ENCODE measurements at regions of chr3 and their contacts with region 1.

Region 1: GRCh38 chr3:131033480-131034080 is 6.9 kb downstream of the NEK11 start:
- DNase-seq: peak; percentile 17 to 50 (median 23)
- H3K4me3 ChIP-seq: no peak overlapping the region
- H3K4me3 Mint-ChIP-seq: no peak overlapping the region
- H3K27ac ChIP-seq: no peak overlapping the region
- H3K27ac Mint-ChIP-seq: no peak overlapping the region
- H3K4me1 ChIP-seq: no peaks in the 10 kb centered on the region
- H3K4me1 Mint-ChIP-seq: no peaks in the 10 kb centered on the region
- H3K27me3 ChIP-seq: no peaks in the 10 kb centered on the region
- H3K27me3 Mint-ChIP-seq: peaks cover 0 to 3% (median 0%) of the 10 kb centered on the region in 3 donors
- CTCF ChIP-seq: peak; percentile 88

Region 2: DNA sequence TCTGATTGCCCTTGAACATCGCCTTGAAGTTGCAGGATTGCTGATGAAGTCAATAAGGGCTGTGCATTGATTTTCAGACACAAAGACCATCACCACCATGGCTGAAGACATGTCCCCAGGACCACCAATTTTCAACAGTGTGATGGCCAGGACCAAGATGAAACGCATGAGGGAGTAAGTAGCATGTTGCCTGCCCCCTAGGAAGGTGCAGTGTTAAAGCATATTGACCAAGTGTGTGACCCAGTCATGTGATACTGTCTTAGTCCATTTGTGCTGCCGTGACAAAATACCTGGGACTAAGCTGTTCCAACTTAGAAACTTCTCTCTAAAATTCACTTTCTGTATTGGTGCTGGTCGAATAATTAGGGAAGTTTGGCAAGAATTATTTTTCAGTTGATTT is 239.8 kb after region 1 on chr3:
- intact Hi-C with region 1: no loop called
- DNase-seq: no peak
- H3K4me3 ChIP-seq: no peak overlapping the region
- H3K4me3 Mint-ChIP-seq: no peak overlapping the region
- H3K27ac ChIP-seq: no peak overlapping the region
- H3K27ac Mint-ChIP-seq: no peak overlapping the region
- H3K4me1 ChIP-seq: no peaks in the 10 kb centered on the region
- H3K4me1 Mint-ChIP-seq: peaks cover 5% of the 10 kb centered on the region
- H3K27me3 ChIP-seq: no peaks in the 10 kb centered on the region
- H3K27me3 Mint-ChIP-seq: peaks cover 0 to 3% (median 2%) of the 10 kb centered on the region in 3 donors
- CTCF ChIP-seq: no peak

Region 3: GRCh38 chr3:132034486-132035464 is 1001.2 kb after region 1 on chr3 and contains the start of gene CPNE4:
- intact Hi-C with region 1: loop called in 1 of 2 experiments (anchors 10 kb)
- DNase-seq: peak; percentile 24 to 39 (median 33)
- H3K4me3 ChIP-seq: peak within 1 kb of the TSS in 1 of 3 experiments; percentile 31
- H3K4me3 Mint-ChIP-seq: peak within 1 kb of the TSS; percentile 6 to 89
- H3K27ac ChIP-seq: no peak within 1 kb of the TSS
- H3K27ac Mint-ChIP-seq: no peak within 1 kb of the TSS
- H3K4me1 ChIP-seq: peaks cover 10 to 18% of the 10 kb centered on the region in 2 donors
- H3K4me1 Mint-ChIP-seq: peaks cover 16% of the 10 kb centered on the region
- H3K27me3 ChIP-seq: peaks cover 44 to 66% of the 10 kb centered on the region in 2 donors
- H3K27me3 Mint-ChIP-seq: peaks cover 43 to 52% (median 46%) of the 10 kb centered on the region in 3 donors
- CTCF ChIP-seq: peak; percentile 75
- polyA plus RNA-seq, gene CPNE4: not detected